IMR-90 (cell line): ENCODE measurements at regions of chr12 and their contacts with region 1.

Region 1: GRCh38 chr12:65823513-65824375 is 539 bp upstream of the HMGA2 start:
- DNase-seq: peak; percentile 58
- ATAC-seq: peak; percentile 31
- H3K4me3 ChIP-seq: peak overlapping the region; percentile 93
- H3K27ac ChIP-seq: peak overlapping the region; percentile 99
- H3K4me1 ChIP-seq: peaks cover 9% of the 10 kb centered on the region; the same call in 1 of the 2 replicates
- H3K27me3 ChIP-seq: no peaks in the 10 kb centered on the region
- CTCF ChIP-seq: no peak
- POLR2A ChIP-seq: no peak
- RAD21 ChIP-seq: peak; percentile 1; the same call in 1 of the 2 replicates

Region 2: DNA sequence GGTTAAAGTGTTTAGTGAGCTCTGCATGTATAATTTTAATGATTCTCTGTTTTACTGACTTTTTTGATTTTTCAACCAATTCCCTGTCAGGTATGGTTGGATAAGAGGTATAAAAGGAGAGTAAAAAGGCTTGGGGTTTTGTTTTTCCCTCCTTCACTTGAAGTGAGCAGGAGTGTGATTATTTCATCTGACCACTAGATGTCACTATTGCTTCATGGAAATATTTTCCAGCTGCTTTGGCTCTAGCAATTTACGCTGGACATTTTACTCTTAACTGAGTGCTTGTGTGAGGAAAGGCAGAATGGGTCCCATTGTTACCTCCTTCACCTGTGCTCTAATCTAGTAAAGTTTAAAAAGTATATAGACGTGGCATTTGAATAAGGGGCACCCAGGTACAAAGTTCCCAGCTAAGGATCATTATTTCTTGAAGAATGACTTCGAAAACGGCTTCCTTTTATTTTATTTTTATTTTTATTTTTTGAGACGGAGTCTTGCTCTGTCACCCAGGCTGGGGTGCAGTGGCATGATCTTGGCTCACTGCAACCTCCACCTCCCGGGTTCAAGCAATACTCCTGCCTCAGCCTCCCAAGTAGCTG is 932.8 kb before region 1 on chr12:
- CTCF ChIA-PET with region 1: no interaction called
- POLR2A ChIA-PET with region 1: no interaction called
- dilution Hi-C with region 1: no loop called
- in situ Hi-C with region 1: loop called (anchors 25 kb)
- intact Hi-C with region 1: no loop called
- DNase-seq: peak; percentile 70
- ATAC-seq: peak; percentile 67
- H3K4me3 ChIP-seq: no peak overlapping the region
- H3K27ac ChIP-seq: no peak overlapping the region
- H3K4me1 ChIP-seq: peaks cover 5% of the 10 kb centered on the region; the same call in 1 of the 2 replicates
- H3K27me3 ChIP-seq: peaks cover 14% of the 10 kb centered on the region; the same call in 1 of the 2 replicates
- CTCF ChIP-seq: peak; percentile 85
- POLR2A ChIP-seq: no peak
- RAD21 ChIP-seq: peak; percentile 92

Region 3: GRCh38 chr12:65556681-65557437 is 266.9 kb before region 1 on chr12:
- CTCF ChIA-PET with region 1: no interaction called
- POLR2A ChIA-PET with region 1: no interaction called
- dilution Hi-C with region 1: no loop called
- in situ Hi-C with region 1: no loop called
- intact Hi-C with region 1: loop called (anchors 2 kb)
- DNase-seq: peak; percentile 85
- ATAC-seq: peak; percentile 99
- H3K4me3 ChIP-seq: no peak overlapping the region
- H3K27ac ChIP-seq: no peak overlapping the region; the same call in 1 of the 2 replicates
- H3K4me1 ChIP-seq: peaks cover 13% of the 10 kb centered on the region
- H3K27me3 ChIP-seq: no peaks in the 10 kb centered on the region
- CTCF ChIP-seq: peak; percentile 91
- POLR2A ChIP-seq: peak; percentile 54; the same call in 1 of the 2 replicates
- RAD21 ChIP-seq: peak; percentile 95

Region 4: GRCh38 chr12:65740873-65741600 is 82.7 kb before region 1 on chr12:
- CTCF ChIA-PET with region 1: no interaction called
- POLR2A ChIA-PET with region 1: interaction called, 4 read pairs
- dilution Hi-C with region 1: no loop called
- in situ Hi-C with region 1: no loop called
- intact Hi-C with region 1: loop called (anchors 2 kb)
- DNase-seq: peak; percentile 74
- ATAC-seq: peak; percentile 98
- H3K4me3 ChIP-seq: peak overlapping the region; percentile 83
- H3K27ac ChIP-seq: peak overlapping the region; percentile 76
- H3K4me1 ChIP-seq: peaks cover 2% of the 10 kb centered on the region; the same call in 1 of the 2 replicates
- H3K27me3 ChIP-seq: no peaks in the 10 kb centered on the region
- CTCF ChIP-seq: no peak
- POLR2A ChIP-seq: peak; percentile 52; the same call in 1 of the 2 replicates
- RAD21 ChIP-seq: no peak

Region 5: GRCh38 chr12:65962921-65963861 is 139.4 kb after region 1 on chr12:
- CTCF ChIA-PET with region 1: no interaction called
- POLR2A ChIA-PET with region 1: no interaction called
- dilution Hi-C with region 1: no loop called
- in situ Hi-C with region 1: no loop called
- intact Hi-C with region 1: loop called (anchors 5 kb)
- DNase-seq: no peak
- ATAC-seq: no peak
- H3K4me3 ChIP-seq: no peak overlapping the region
- H3K27ac ChIP-seq: no peak overlapping the region
- H3K4me1 ChIP-seq: peaks cover 12% of the 10 kb centered on the region
- H3K27me3 ChIP-seq: no peaks in the 10 kb centered on the region
- CTCF ChIP-seq: peak; percentile 19; the same call in 1 of the 2 replicates
- POLR2A ChIP-seq: no peak
- RAD21 ChIP-seq: no peak

Region 6: GRCh38 chr12:66087365-66087943 is 263.7 kb after region 1 on chr12:
- CTCF ChIA-PET with region 1: no interaction called
- POLR2A ChIA-PET with region 1: no interaction called
- dilution Hi-C with region 1: no loop called
- in situ Hi-C with region 1: no loop called
- intact Hi-C with region 1: loop called (anchors 1 kb)
- DNase-seq: peak; percentile 88
- ATAC-seq: peak; percentile 93
- H3K4me3 ChIP-seq: no peak overlapping the region
- H3K27ac ChIP-seq: no peak overlapping the region
- H3K4me1 ChIP-seq: peaks cover 4% of the 10 kb centered on the region
- H3K27me3 ChIP-seq: no peaks in the 10 kb centered on the region
- CTCF ChIP-seq: peak; percentile 89
- POLR2A ChIP-seq: peak; percentile 30; the same call in 1 of the 2 replicates
- RAD21 ChIP-seq: peak; percentile 91